BJ (cell line): ENCODE measurements at regions of chr16 and their contacts with region 1.

Region 1: DNA sequence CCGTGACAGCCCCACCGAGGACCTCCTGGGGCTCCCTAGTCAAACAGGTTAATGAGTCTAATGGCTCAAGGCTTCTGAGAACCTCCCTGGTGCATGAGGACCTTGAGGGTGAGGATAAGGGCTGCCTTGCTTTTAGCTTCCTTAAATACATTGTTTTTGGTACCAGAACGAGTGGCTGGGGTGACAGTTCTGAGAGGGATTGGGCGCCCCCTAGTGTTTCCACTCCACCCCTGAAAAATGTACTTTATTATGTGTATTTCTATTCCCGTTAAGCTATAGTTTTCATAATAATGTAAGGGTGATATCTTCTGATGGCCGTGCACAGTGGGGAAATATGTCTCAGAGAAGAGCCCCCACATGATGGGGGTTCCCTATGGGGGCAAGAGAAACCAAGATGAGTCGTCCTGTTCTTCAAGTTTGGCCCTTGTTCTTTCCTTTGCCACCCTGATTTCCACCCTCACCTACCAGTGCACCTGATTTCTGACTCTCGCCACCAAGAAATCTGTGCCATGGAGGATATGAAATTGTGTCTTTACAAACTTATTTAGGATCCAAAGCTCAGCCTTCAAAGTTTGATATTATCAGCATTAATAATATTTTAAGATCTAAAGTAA is 14.5 kb upstream of the VWA3A start:
- DNase-seq: no peak
- H3K4me3 ChIP-seq: no peak overlapping the region
- H3K27me3 ChIP-seq: no peaks in the 10 kb centered on the region
- CTCF ChIP-seq: peak; percentile 85

Region 2: DNA sequence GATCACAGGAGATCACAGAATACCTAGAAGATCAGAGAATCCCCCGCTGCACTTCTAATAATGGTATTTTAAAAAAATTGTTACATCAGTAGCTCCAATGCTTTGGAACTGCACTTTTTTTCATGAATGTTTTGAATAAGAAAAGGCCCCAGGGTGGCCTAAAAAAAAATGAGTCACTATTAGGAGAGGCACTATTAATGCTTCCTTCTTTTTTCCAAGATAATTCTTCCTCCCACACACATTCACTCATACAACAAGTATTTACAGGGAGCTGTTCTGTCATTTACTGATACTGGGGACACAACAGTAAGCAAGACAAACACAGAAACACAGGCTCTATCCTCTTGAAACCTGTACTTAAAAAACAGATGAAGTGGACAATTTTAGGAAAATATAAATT is 76.2 kb before region 1 on chr16:
- CTCF ChIA-PET with region 1: interaction called, 90 read pairs
- POLR2A ChIA-PET with region 1: no interaction called
- DNase-seq: peak; percentile 72
- H3K4me3 ChIP-seq: no peak overlapping the region
- H3K27me3 ChIP-seq: no peaks in the 10 kb centered on the region
- CTCF ChIP-seq: no peak

Region 3: DNA sequence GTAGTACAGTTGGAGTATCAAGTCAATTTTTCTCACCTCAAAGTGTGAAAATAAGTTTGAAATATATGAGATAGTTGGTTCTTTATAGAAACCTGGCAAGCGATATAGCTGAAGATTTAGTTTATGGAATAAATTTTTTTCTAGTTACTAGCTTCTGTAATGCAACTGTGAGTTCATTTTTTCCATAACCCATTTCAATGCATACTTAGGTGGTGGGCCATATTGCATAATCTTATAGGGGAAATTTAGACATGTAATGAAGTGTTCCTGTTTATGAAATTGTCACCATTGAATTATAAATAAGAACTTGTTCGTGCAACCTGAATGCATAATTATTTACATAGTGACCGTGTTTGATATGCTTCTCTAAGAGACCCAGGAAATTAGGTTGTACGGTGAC is 60.9 kb before region 1 on chr16:
- CTCF ChIA-PET with region 1: interaction called, 13 read pairs
- POLR2A ChIA-PET with region 1: no interaction called
- DNase-seq: no peak
- H3K4me3 ChIP-seq: no peak overlapping the region
- H3K27me3 ChIP-seq: no peaks in the 10 kb centered on the region
- CTCF ChIP-seq: no peak

Region 4: DNA sequence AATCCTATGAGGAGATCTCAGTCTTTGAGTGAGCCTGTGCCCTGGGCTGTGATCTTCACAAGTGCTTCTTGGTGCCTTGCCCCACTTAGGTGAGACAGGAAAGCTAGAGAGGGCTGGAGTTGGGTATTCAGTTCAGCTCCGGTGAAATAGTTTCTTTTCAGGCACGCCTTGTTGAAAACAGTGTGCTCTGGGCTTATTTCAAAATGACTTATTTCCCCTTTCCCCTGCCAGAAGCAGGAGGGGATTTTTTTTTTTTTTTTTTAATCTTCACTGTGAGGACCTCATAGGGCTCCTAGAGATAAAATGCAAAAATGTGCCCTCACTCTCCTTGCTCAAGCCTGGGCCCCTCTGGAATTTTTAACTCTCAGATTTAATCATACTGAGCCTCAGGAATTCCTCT is 42.7 kb before region 1 on chr16:
- CTCF ChIA-PET with region 1: interaction called, 14 read pairs
- POLR2A ChIA-PET with region 1: no interaction called
- DNase-seq: no peak
- H3K4me3 ChIP-seq: no peak overlapping the region
- H3K27me3 ChIP-seq: no peaks in the 10 kb centered on the region
- CTCF ChIP-seq: no peak

Region 5: GRCh38 chr16:22063888-22064467 is 13.8 kb before region 1 on chr16:
- CTCF ChIA-PET with region 1: interaction called, 30 read pairs
- POLR2A ChIA-PET with region 1: no interaction called
- DNase-seq: no peak
- H3K4me3 ChIP-seq: no peak overlapping the region
- H3K27me3 ChIP-seq: no peaks in the 10 kb centered on the region
- CTCF ChIP-seq: no peak

Region 6: DNA sequence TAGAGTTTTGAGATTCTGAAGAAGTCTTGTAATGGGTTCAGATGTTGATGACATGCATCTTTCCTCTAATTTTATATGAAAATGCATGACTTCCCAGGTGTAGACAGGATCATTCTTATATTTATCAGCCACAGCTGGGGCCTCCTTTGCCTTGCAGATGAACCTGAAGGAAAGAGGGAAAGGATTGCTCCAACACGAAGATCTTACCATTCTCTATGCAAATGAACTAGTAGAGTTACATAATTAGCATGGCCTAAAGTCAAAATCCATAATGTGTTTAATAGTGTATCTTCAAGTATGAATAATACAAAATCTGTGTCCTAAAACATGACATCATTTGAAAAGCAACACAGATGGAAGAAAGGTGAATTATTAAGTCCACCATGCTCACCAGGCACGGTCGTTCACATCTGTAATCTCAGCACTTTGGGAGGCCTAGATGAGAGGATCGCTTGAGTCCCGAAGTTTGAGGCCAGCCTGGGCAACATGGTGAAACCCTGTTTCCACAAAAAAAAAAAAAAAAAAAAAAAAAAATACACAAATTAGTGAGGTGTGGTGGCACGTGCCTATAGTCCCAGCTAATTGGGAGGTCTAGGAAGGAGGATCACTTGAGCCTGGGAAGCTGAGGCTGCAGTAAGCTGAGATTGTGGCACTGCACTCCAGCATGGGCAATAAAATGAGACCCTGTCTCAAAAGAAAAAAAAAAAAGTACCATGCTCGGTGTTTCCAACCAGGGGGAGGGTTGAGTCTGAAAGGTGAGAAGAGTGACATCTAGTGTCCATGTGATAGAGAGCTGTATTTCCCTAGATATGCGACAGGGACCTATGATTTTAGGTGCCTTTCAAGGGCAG is 20.8 kb after region 1 on chr16:
- CTCF ChIA-PET with region 1: interaction called, 40 read pairs
- POLR2A ChIA-PET with region 1: no interaction called
- DNase-seq: no peak
- H3K4me3 ChIP-seq: no peak overlapping the region
- H3K27me3 ChIP-seq: no peaks in the 10 kb centered on the region
- CTCF ChIP-seq: peak; percentile 74

Region 7: DNA sequence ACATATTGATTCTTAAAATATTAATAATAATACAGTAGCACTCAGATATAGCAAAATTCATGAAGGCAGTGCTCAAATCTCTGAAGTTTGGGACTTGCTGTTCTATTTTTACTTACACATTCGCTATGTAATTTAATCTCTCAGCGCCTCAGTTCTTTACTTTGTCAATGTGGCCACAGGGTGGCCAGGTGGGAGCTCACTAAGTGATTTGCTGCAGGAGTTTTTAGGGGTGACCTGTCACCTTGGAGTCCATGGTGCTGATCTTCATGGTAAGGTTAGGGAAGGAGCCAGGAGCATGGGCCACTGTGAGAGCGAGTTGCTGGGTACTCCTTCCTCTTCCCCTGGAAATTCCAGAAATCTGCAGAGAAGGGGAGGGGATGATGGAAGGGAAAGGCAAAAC is 42.6 kb after region 1 on chr16:
- CTCF ChIA-PET with region 1: no interaction called
- POLR2A ChIA-PET with region 1: no interaction called
- DNase-seq: no peak
- H3K4me3 ChIP-seq: no peak overlapping the region
- H3K27me3 ChIP-seq: 0 out of 2 replicates have a peak, but pooled peaks cover 1% of the 10 kb centered on the region
- CTCF ChIP-seq: no peak

Region 8: DNA sequence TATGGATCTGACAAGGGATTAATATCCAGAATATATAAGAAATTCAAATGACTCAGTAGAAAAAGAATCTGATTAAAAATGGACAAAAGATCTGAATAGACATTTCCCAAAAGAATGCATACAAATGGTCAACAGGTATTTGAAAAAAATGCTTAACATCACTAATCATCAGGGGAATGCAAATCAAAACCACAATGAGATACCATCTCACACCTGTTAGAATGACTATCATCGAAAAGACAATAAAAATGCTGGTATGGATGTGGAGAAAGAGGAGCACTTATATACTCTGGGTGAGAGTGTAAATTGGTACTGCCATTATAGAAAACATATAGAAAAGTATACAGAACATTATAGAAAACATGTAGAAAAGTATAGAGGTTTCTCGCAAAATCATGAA is 719.7 kb after region 1 on chr16:
- CTCF ChIA-PET with region 1: no interaction called
- POLR2A ChIA-PET with region 1: no interaction called
- DNase-seq: no peak
- H3K4me3 ChIP-seq: no peak overlapping the region
- H3K27me3 ChIP-seq: no peaks in the 10 kb centered on the region; the same call in 1 of the 2 replicates
- CTCF ChIP-seq: no peak